AG04449 (cell line): ENCODE measurements at regions of chr4 and their contacts with region 1.

Region 1: GRCh38 chr4:76087007-76087769 is 12.7 kb downstream of the ART3 start:
- DNase-seq: no peak
- H3K4me3 ChIP-seq: no peak overlapping the region
- CTCF ChIP-seq: peak; percentile 54

Region 2: DNA sequence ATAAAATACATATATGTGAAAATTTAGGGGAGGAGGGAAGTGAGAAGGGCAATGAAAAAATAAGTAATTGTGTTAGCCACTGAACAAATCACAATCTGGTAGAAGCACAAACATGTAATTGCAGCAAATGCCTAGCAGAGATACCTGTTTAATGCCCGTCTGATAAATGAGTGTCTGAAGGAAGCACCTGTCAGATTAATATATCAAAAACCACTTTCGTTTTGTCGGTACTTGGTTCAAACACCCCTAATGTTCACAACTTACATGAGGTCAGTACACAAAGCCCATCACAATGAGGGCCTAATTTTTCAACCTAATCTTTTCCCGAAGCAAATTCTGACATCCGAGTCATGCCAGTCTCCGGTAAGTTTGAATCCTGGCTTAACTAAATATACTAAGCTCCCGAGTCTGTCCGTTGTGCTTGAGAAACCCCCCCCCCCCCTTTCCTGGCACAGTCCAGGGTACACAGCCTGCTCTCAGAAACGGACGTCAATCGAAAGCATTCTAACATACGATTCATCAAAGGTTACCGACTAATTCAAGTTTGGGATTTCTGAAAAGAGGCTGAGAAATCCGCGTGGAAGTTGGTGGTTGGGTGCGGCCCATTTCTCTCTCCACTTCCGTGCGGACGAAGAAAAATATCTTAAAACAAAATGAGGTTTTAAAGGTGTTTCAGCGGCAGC is 97.2 kb before region 1 on chr4:
- CTCF ChIA-PET with region 1: interaction called, 37 read pairs
- POLR2A ChIA-PET with region 1: no interaction called
- DNase-seq: no peak
- H3K4me3 ChIP-seq: peak overlapping the region; percentile 89
- CTCF ChIP-seq: no peak

Region 3: DNA sequence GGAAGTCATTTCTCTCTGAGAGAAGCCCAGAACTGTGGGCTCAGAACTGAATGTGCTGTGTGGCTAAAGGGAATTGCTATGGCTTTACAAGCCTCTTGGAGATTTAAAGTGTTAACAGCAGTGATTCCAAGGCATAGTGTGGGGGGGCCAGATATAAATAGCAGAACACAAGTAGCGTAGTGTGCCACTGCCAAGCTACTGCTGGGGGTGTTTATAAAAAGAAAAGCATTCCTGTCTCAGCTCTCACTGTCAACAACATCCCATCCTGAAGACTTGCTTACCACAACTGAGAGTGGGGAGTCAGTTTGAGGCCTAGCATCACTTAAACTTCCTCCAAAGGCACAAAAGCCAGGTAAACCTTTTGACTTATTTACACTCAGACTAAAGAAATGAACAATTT is 12.7 kb before region 1 on chr4 and contains the start of gene ART3:
- CTCF ChIA-PET with region 1: interaction called, 15 read pairs
- POLR2A ChIA-PET with region 1: no interaction called
- DNase-seq: no peak
- H3K4me3 ChIP-seq: no peak within 1 kb of the TSS
- CTCF ChIP-seq: no peak